ENCODE measurements at regions of chr2 and their contacts with region 1.

Region 1: GRCh38 chr2:62475172-62476011 is 30.6 kb downstream of the TMEM17 start:
- DNase-seq: peak; percentile 95
- H3K4me3 ChIP-seq: peak overlapping the region in 1 of 3 experiments; percentile 24
- H3K27ac ChIP-seq: peak overlapping the region; percentile 8
- H3K4me1 ChIP-seq: peaks cover 28% of the 10 kb centered on the region
- H3K27me3 ChIP-seq: no peaks in the 10 kb centered on the region
- CTCF ChIP-seq: no peak
- POLR2A ChIP-seq: no peak

Region 2: GRCh38 chr2:62443886-62444285 is 31.5 kb before region 1 on chr2:
- CTCF ChIA-PET with region 1: no interaction called
- POLR2A ChIA-PET with region 1: no interaction called
- dilution Hi-C with region 1: no loop called
- intact Hi-C with region 1: no loop called
- DNase-seq: no peak
- H3K4me3 ChIP-seq: no peak overlapping the region
- H3K27ac ChIP-seq: no peak overlapping the region
- H3K4me1 ChIP-seq: no peaks in the 10 kb centered on the region
- H3K27me3 ChIP-seq: peaks cover 12 to 13% of the 10 kb centered on the region in 2 experiments
- CTCF ChIP-seq: no peak
- POLR2A ChIP-seq: no peak

Region 3: GRCh38 chr2:62489162-62489561 is 13.8 kb after region 1 on chr2:
- CTCF ChIA-PET with region 1: interaction called, 7 read pairs
- POLR2A ChIA-PET with region 1: no interaction called
- dilution Hi-C with region 1: no loop called
- intact Hi-C with region 1: loop called (anchors 1 kb)
- DNase-seq: peak; percentile 92
- H3K4me3 ChIP-seq: no peak overlapping the region
- H3K27ac ChIP-seq: no peak overlapping the region
- H3K4me1 ChIP-seq: no peaks in the 10 kb centered on the region
- H3K27me3 ChIP-seq: no peaks in the 10 kb centered on the region
- CTCF ChIP-seq: no peak
- POLR2A ChIP-seq: no peak

Region 4: GRCh38 chr2:62577994-62578781 is 102.8 kb after region 1 on chr2:
- CTCF ChIA-PET with region 1: interaction called, 4 read pairs
- POLR2A ChIA-PET with region 1: no interaction called
- dilution Hi-C with region 1: no loop called
- intact Hi-C with region 1: loop called (anchors 1 kb)
- DNase-seq: peak; percentile 80
- H3K4me3 ChIP-seq: no peak overlapping the region
- H3K27ac ChIP-seq: peak overlapping the region; percentile 85
- H3K4me1 ChIP-seq: peaks cover 24% of the 10 kb centered on the region
- H3K27me3 ChIP-seq: no peaks in the 10 kb centered on the region
- CTCF ChIP-seq: no peak
- POLR2A ChIP-seq: no peak

Region 5: DNA sequence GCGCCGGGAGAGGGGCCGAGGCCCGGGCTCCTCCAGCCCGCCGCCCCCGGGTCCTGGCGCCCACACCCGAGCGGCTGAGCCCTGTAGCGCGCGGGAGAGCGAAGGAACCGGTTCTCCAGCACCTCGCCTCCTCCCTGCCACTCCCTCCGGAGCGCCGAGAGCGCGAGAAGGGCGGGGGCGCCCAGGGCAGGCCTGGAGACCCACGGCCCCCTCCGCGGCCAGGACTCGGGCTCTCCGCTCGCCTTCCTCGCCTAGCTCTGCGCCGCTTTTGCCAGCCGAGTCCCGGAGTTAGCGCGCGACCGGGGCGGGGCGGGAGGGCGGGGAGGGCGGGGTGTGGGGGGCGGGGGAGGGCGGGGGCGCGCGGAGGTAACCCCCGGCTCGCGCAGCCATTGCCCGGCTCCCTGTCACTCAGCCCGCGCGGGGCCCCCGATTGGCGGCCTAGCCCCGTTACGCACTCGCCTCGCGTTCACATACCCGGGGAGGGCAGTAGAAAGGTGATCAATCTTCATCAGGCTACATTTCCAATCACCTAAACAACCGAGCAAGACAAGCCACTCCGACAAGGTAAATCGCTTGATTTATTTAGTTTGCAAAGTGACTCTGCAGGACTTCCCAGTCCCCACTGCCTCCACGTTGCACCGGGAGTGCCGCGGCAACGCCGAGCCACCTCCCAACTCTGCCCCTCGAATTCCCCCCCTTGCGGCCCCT is 575.1 kb after region 1 on chr2 and contains the start of gene OTX1:
- CTCF ChIA-PET with region 1: no interaction called
- POLR2A ChIA-PET with region 1: no interaction called
- dilution Hi-C with region 1: no loop called
- intact Hi-C with region 1: loop called (anchors 10 kb)
- DNase-seq: peak; percentile 39
- H3K4me3 ChIP-seq: peak within 1 kb of the TSS; percentile 8 to 42 (median 41)
- H3K27ac ChIP-seq: no peak within 1 kb of the TSS
- H3K4me1 ChIP-seq: peaks cover 25% of the 10 kb centered on the region
- H3K27me3 ChIP-seq: peaks cover 71 to 76% of the 10 kb centered on the region in 2 experiments
- CTCF ChIP-seq: no peak
- POLR2A ChIP-seq: no peak
- total RNA-seq, gene OTX1: 0.30 TPM in 1 of 2 replicates, not detected in the other